ENCODE measurements at regions of chr16 and their contacts with region 1.

Region 1: DNA sequence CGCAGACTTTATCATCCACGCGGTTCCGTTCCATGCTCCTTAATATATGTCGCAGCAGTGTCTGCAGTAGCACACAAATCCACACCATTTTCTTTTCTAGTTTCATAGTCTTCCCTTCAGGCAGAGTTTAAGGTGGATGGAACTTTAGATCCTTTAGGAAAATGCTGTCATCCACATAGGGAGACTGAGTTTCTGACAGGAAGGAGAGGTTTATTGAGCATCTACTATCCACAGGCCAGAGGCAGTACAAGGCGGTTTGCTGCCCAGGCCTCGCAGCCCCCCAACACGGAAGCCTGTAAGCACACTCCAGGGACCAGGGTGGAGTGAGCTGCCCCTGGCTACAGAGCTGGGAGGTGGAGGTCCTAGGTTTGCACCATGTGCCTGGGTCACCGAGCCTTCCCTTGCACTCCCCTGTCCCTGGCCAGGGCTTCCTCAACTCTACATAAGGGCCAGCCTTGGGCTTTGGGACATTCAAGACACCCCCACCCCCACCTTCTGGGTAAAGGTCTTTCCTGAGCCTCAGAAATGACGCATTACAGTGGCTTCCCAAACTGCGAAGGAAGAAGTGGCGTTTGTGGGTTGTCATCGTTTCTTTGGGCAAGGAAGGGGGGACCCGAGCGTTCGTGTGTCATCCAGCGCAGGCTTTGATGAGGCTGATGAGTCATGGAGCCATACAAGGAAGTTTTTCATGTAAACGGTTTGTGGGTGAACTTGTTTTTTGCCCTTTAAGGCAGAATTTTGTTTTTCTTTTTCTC is 146.5 kb upstream of the PLCG2 start:
- DNase-seq: peak; percentile 20 to 81 (median 73)
- ATAC-seq: peak; percentile 91
- H3K4me3 ChIP-seq: no peak overlapping the region
- H3K4me3 Mint-ChIP-seq: peak overlapping the region in 8 of 10 donors; percentile 0 to 71 (median 52)
- H3K27ac ChIP-seq: peak overlapping the region; percentile 56
- H3K27ac Mint-ChIP-seq: peak overlapping the region; percentile 53 to 99 (median 90)
- H3K4me1 ChIP-seq: peaks cover 18 to 20% of the 10 kb centered on the region in 2 donors
- H3K4me1 Mint-ChIP-seq: peaks cover 18 to 72% (median 52%) of the 10 kb centered on the region in 7 donors
- H3K27me3 ChIP-seq: no peaks in the 10 kb centered on the region
- H3K27me3 Mint-ChIP-seq: no peaks in the 10 kb centered on the region

Region 2: DNA sequence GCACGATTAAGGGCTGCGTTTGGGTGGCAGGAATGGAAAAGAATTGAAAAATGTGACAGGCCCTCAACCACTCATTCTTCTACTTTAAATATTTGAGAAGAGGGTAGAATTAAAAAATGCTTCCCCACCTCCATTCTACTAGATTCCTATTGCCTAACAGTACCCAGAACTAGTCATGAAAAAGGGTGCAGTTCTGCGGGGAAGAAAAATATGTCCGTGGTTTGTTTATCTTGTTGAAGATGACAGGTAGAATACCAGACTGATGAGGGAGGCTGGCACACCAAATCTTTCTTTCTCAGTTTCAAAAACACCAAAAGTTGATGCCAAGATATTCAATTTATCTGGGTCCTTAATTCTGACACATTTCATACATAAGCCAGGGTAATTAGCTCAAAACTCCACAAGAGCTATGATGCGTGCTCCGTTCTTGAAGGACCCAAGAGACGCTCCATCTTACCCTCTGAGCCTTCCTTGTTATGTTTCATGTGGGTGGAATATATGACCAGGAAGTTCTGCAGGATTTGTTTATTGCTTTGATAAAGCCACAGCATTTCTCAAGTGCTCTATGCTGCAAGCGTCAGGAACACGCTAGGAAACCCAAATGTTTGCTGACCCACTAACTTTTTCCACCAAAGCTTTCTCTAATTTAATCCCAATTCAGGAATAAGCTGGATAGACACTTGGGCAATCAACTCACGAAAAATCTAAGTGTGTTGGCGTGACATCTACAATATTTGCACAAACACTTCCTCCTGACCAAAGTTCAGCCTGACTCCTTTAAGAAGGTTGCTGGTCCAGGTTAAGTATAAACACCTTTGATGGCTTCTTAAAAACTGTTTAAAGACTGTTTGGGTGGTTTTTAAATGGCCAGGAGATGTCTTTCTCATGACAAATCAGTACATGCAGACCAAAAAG is 338.4 kb before region 1 on chr16:
- CTCF ChIA-PET with region 1: no interaction called
- POLR2A ChIA-PET with region 1: no interaction called
- intact Hi-C with region 1: no loop called
- DNase-seq: no peak
- ATAC-seq: no peak
- H3K4me3 ChIP-seq: no peak overlapping the region
- H3K4me3 Mint-ChIP-seq: no peak overlapping the region
- H3K27ac ChIP-seq: no peak overlapping the region
- H3K27ac Mint-ChIP-seq: no peak overlapping the region
- H3K4me1 ChIP-seq: no peaks in the 10 kb centered on the region
- H3K4me1 Mint-ChIP-seq: no peaks in the 10 kb centered on the region
- H3K27me3 ChIP-seq: no peaks in the 10 kb centered on the region
- H3K27me3 Mint-ChIP-seq: peaks cover 10 to 29% (median 20%) of the 10 kb centered on the region in 5 donors

Region 3: DNA sequence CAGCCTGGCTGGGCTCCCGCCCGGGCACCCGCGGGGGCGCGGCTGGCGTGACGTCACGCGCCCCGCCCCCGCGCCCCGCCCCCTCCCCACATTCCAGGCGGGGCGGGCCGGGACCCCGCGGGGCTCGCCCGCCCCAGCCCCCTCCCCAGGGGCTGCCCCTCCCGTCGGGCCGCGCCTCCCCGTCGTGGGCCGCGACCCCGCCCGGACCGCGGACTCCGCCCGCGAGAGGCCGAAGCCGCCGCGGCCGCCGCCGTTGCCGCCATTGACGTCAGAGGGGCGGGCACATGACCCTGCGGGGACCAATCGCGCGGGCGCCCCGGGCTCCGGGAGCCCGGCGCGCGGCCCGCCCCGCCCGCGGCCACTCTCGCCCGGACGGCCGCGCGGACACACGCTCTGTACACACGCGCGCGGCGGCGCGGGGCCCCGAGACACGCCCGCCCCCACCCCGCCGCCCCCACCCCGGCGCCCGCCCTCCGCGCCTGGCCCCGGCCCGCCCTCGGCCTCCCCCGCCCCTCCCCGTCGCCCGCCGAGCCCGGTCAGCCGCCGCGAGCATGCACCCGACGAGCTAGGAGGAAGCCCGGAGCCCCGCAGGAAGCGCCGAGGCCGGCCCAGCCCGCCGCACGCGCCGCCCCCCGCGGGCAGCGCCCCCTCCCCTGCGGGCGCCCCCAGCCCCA is 188.0 kb before region 1 on chr16 and contains the start of gene CMIP:
- CTCF ChIA-PET with region 1: no interaction called
- POLR2A ChIA-PET with region 1: no interaction called
- intact Hi-C with region 1: loop called (anchors 2 to 5 kb)
- DNase-seq: peak; percentile 66 to 89 (median 79)
- ATAC-seq: peak; percentile 88
- H3K4me3 ChIP-seq: peak within 1 kb of the TSS; percentile 91
- H3K4me3 Mint-ChIP-seq: peak within 1 kb of the TSS; percentile 85 to 94 (median 90)
- H3K27ac ChIP-seq: peak within 1 kb of the TSS; percentile 77
- H3K27ac Mint-ChIP-seq: peak within 1 kb of the TSS; percentile 90 to 97 (median 94)
- H3K4me1 ChIP-seq: peaks cover 35 to 37% of the 10 kb centered on the region in 2 donors
- H3K4me1 Mint-ChIP-seq: peaks cover 26 to 54% (median 48%) of the 10 kb centered on the region in 7 donors
- H3K27me3 ChIP-seq: no peaks in the 10 kb centered on the region
- H3K27me3 Mint-ChIP-seq: peaks cover 0 to 41% (median 0%) of the 10 kb centered on the region in 5 donors
- total RNA-seq, gene CMIP: 28.9 to 75.4 (median 38.2) TPM

Region 4: DNA sequence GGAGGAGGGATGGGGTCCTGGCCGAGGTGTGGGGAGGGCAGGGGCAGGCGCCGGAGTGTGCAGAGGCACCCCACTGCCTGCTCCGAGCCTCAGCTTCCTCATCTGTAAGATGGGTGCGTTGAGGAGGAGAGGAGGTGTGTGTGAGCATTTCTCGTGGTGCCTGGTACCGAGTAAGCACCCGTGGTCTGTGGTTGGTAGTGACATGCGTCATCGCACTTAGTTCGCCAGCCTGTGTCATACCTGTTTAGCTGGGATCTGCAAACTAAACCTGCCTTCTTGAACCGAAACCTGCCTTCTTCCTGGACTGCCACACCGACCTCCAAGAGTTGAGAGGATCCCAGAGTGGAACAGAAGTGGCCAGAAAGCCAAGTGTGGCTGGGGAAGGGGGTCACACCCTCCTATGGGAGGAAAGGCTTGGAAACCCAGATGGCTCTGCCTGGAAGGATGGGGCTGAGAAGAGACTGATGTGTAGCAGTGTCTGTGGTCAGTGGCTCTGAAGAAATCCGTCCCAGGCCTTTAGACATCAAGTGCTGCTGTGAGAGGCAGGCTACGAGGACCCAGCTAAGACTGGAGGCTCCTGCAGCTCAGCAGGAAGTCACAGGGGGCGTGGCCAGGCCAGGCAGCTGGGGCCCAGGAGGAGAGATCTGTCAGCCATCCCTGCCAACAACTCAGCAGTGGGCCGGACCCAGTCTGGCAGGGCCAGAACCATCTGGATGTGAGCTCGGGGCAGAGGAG is 16.1 kb before region 1 on chr16:
- CTCF ChIA-PET with region 1: interaction called, 3 read pairs
- POLR2A ChIA-PET with region 1: interaction called, 3 read pairs
- intact Hi-C with region 1: loop called (anchors 1 to 2 kb)
- DNase-seq: peak; percentile 44 to 64 (median 56)
- ATAC-seq: peak; percentile 92
- H3K4me3 ChIP-seq: peak overlapping the region; percentile 34
- H3K4me3 Mint-ChIP-seq: peak overlapping the region in 9 of 10 donors; percentile 26 to 64 (median 50)
- H3K27ac ChIP-seq: peak overlapping the region; percentile 70
- H3K27ac Mint-ChIP-seq: peak overlapping the region in 5 of 9 donors; percentile 78 to 93 (median 88)
- H3K4me1 ChIP-seq: peaks cover 22% of the 10 kb centered on the region in 2 donors
- H3K4me1 Mint-ChIP-seq: peaks cover 0 to 12% (median 10%) of the 10 kb centered on the region in 7 donors
- H3K27me3 ChIP-seq: no peaks in the 10 kb centered on the region
- H3K27me3 Mint-ChIP-seq: no peaks in the 10 kb centered on the region

Region 5: GRCh38 chr16:81645266-81645694 is 12.7 kb after region 1 on chr16:
- CTCF ChIA-PET with region 1: no interaction called
- POLR2A ChIA-PET with region 1: no interaction called
- intact Hi-C with region 1: no loop called
- DNase-seq: no peak
- ATAC-seq: no peak
- H3K4me3 ChIP-seq: no peak overlapping the region
- H3K4me3 Mint-ChIP-seq: no peak overlapping the region
- H3K27ac ChIP-seq: no peak overlapping the region
- H3K27ac Mint-ChIP-seq: no peak overlapping the region
- H3K4me1 ChIP-seq: no peaks in the 10 kb centered on the region
- H3K4me1 Mint-ChIP-seq: peaks cover 9 to 27% (median 16%) of the 10 kb centered on the region in 7 donors
- H3K27me3 ChIP-seq: no peaks in the 10 kb centered on the region
- H3K27me3 Mint-ChIP-seq: no peaks in the 10 kb centered on the region

Region 6: GRCh38 chr16:81778861-81779535 is 146.4 kb after region 1 on chr16 and contains the start of gene PLCG2:
- CTCF ChIA-PET with region 1: no interaction called
- POLR2A ChIA-PET with region 1: no interaction called
- intact Hi-C with region 1: loop called in 1 of 2 experiments (anchors 5 kb)
- DNase-seq: peak in 7 of 9 donors; percentile 11 to 87 (median 24)
- ATAC-seq: peak; percentile 97
- H3K4me3 ChIP-seq: peak within 1 kb of the TSS; percentile 37
- H3K4me3 Mint-ChIP-seq: peak within 1 kb of the TSS; percentile 72 to 92 (median 82)
- H3K27ac ChIP-seq: no peak within 1 kb of the TSS
- H3K27ac Mint-ChIP-seq: peak within 1 kb of the TSS in 1 of 9 donors; percentile 72
- H3K4me1 ChIP-seq: peaks cover 4 to 8% of the 10 kb centered on the region in 2 donors
- H3K4me1 Mint-ChIP-seq: peaks cover 0 to 23% (median 21%) of the 10 kb centered on the region in 7 donors
- H3K27me3 ChIP-seq: peaks cover 0 to 3% of the 10 kb centered on the region in 2 donors
- H3K27me3 Mint-ChIP-seq: peaks cover 33 to 63% (median 44%) of the 10 kb centered on the region in 5 donors
- total RNA-seq, gene PLCG2: 1.4 to 85.8 (median 5.9) TPM

Measured in naive thymus-derived CD4-positive, alpha-beta T cell (primary cell).